ENCODE measurements at regions of chr9 and their contacts with region 1.

Region 1: DNA sequence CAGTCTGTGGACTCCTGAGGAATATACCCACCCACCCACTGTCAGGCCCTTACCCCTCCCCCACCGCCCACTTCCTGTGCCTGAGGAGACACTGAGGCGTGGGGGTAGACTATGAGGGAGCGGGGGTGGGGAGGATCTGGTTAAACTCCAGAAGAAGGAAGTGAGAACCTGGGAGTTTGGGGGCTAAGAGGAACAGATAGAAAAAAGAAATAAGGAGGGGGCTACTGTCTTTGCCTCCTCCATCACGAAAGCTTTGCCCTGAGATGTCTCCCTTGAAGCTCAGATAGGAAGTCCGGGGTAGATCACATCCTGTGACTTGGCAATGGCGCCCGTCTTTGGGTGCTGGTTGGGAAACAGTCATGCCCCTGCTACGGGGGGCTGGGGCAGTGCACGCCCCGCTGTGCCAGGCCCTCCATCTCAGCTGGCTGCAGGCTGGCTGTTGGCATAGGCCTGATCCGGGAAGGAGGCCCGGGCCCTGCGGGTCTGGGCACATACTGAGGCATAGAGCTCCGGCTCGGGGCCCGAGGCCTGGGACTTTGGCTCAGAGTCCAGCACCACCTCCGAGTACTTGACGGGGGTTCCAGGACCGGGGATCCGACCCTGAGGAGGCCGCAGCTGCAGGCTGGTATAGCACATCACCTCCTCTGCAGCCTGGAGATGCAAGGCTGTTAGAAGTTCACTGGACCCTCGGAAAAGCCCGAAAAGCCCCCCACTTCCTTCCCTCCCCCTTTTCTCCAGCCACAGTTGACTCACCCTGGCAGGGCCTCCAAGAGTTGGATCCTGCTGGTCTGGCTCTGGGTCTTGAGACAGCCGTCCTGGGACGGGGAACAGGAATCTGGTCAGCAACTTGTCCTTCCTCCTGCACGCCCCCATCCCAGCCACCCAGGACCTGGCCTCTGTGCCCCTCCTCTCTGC is 1.0 kb downstream of the SIT1 start:
- DNase-seq: no peak
- H3K4me3 ChIP-seq: peak overlapping the region in 2 of 3 donors; percentile 3 to 7
- H3K27ac ChIP-seq: peak overlapping the region in 1 of 2 donors; percentile 30
- H3K4me1 ChIP-seq: no peaks in the 10 kb centered on the region
- H3K27me3 ChIP-seq: no peaks in the 10 kb centered on the region
- CTCF ChIP-seq: no peak
- POLR2A ChIP-seq: no peak

Region 2: DNA sequence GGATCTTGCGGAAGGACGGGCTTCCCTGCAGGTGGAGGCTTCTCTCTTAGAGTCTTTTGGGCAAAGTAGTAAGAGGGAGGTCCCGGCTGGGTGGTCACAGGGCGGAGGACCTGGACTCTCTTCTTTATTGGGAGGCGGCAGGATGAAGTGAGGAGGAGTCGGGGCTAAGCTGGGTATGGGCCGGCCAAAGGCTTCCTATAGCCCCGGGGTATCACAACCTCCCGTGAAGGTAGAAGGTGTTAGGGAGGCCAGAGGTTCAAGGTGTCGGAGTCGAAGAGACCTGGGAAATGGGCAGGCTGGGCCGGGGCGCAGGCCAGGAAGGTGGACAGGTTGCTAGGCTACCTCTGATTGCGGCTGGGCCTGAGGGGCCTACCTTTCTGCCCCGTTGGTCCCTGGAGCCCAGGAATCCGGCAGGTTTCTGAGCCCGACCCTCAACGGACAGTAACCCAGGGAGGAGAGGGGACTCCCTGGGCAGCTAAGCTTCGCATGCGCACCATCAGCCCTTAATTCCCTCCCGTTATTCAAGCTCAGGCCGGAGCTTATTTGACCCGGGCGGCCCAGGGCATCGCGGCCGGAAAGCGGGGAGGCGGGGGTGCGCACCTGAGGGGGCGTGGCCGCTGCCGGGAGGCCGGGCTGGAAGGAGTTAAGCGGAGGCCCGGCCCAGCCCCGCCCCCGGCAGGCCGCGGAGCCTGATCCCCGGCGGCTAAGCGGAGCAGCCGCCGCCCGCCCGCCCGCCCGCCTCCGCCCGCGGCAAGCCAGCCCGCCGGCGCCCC is 44.9 kb before region 1 on chr9 and contains the start of gene TESK1:
- intact Hi-C with region 1: loop called (anchors 5 kb)
- DNase-seq: peak; percentile 61 to 76
- H3K4me3 ChIP-seq: peak within 1 kb of the TSS; percentile 65 to 83 (median 77)
- H3K27ac ChIP-seq: peak within 1 kb of the TSS; percentile 87 to 91
- H3K4me1 ChIP-seq: peaks cover 5 to 10% of the 10 kb centered on the region in 2 donors
- H3K27me3 ChIP-seq: no peaks in the 10 kb centered on the region
- CTCF ChIP-seq: no peak
- POLR2A ChIP-seq: no peak
- total RNA-seq, gene TESK1: 26.5 to 50.4 (median 33.8) TPM